Adrenal gland (tissue), 19 donors: ENCODE measurements at regions of chr15 and their contacts with region 1.

Region 1: GRCh38 chr15:85412956-85413854 is 32.8 kb downstream of the AKAP13 start:
- DNase-seq: peak; percentile 44 to 88 (median 79)
- H3K4me3 ChIP-seq: no peak overlapping the region
- H3K27ac ChIP-seq: peak overlapping the region in 3 of 5 donors; percentile 40 to 69 (median 63)
- H3K4me1 ChIP-seq: peaks cover 15 to 45% of the 10 kb centered on the region in 2 donors
- H3K27me3 ChIP-seq: no peaks in the 10 kb centered on the region
- CTCF ChIP-seq: no peak
- POLR2A ChIP-seq: peak in 1 of 2 donors; percentile 20

Region 2: GRCh38 chr15:84992157-84992944 is 420.9 kb before region 1 on chr15:
- intact Hi-C with region 1: no loop called
- DNase-seq: peak in 2 of 7 donors; percentile 32 to 75
- H3K4me3 ChIP-seq: no peak overlapping the region
- H3K27ac ChIP-seq: peak overlapping the region in 3 of 5 donors; percentile 43 to 79 (median 57)
- H3K4me1 ChIP-seq: peaks cover 3 to 52% of the 10 kb centered on the region in 2 donors
- H3K27me3 ChIP-seq: no peaks in the 10 kb centered on the region
- CTCF ChIP-seq: no peak
- POLR2A ChIP-seq: no peak

Region 3: GRCh38 chr15:85329561-85330422 is 83.4 kb before region 1 on chr15:
- intact Hi-C with region 1: loop called in 1 of 2 experiments (anchors 10 kb)
- DNase-seq: peak in 5 of 7 donors; percentile 30 to 67 (median 50)
- H3K4me3 ChIP-seq: peak overlapping the region in 3 of 4 donors; percentile 26 to 63 (median 38)
- H3K27ac ChIP-seq: peak overlapping the region; percentile 19 to 90 (median 78)
- H3K4me1 ChIP-seq: peaks cover 11 to 23% of the 10 kb centered on the region in 2 donors
- H3K27me3 ChIP-seq: no peaks in the 10 kb centered on the region
- CTCF ChIP-seq: no peak
- POLR2A ChIP-seq: peak in 1 of 2 donors; percentile 18

Region 4: GRCh38 chr15:85354461-85354860 is 58.7 kb before region 1 on chr15:
- intact Hi-C with region 1: no loop called
- DNase-seq: no peak
- H3K4me3 ChIP-seq: no peak overlapping the region
- H3K27ac ChIP-seq: no peak overlapping the region
- H3K4me1 ChIP-seq: peaks cover 11% of the 10 kb centered on the region in 2 donors
- H3K27me3 ChIP-seq: no peaks in the 10 kb centered on the region
- CTCF ChIP-seq: no peak
- POLR2A ChIP-seq: no peak

Region 5: GRCh38 chr15:85463276-85463892 is 50.2 kb after region 1 on chr15:
- intact Hi-C with region 1: no loop called
- DNase-seq: no peak
- H3K4me3 ChIP-seq: no peak overlapping the region
- H3K27ac ChIP-seq: no peak overlapping the region
- H3K4me1 ChIP-seq: peaks cover 0 to 9% of the 10 kb centered on the region in 2 donors
- H3K27me3 ChIP-seq: no peaks in the 10 kb centered on the region
- CTCF ChIP-seq: no peak
- POLR2A ChIP-seq: no peak

Region 6: GRCh38 chr15:85897926-85898278 is 484.7 kb after region 1 on chr15:
- intact Hi-C with region 1: no loop called
- DNase-seq: no peak
- H3K4me3 ChIP-seq: no peak overlapping the region
- H3K27ac ChIP-seq: no peak overlapping the region
- H3K4me1 ChIP-seq: no peaks in the 10 kb centered on the region
- H3K27me3 ChIP-seq: peaks cover 6% of the 10 kb centered on the region
- CTCF ChIP-seq: no peak
- POLR2A ChIP-seq: no peak